ENCODE measurements at regions of chr1 and their contacts with region 1.

Region 1: DNA sequence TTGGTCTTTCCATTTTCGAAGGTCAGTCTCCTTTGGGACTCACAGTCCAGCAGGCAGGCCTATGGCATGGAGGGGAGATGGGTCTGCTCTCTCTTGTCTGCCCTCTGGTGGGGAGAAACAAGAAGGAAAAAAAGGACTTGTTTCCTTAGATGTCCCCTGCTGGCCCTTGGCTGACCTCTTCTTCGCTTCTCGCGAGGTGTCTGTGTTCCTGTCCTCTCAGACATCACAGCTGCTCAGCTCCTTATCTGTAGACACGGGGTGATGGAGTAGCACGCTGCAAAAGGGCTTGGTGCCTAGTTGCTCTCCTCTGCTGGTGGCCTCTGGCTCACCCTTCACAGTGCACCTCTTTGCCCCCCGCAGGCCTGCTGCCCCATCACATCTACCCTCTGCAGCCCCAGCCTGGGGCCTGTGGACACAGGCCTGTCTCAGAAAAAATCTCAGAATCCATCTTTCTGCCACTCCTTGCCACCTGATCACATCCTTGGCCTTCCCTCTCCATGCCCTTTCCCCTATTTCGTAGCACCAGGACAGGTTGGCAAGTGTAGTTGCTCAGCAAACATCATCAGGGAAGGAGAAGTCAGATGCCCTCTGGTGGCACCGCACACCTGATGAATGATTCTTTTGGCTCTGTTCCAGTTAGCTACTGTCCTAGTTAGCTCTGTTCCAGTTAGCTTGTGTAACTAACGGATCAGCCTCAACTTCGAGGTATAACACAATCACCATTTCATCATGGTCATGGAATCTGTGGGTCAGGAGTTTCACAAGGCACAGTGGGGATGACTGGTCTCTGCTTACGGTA is 18.7 kb upstream of the AK2 start:
- DNase-seq: peak in 9 of 35 experiments; percentile 10 to 64 (median 19)
- ATAC-seq: peak in 2 of 4 experiments; percentile 30 to 44
- H3K4me3 ChIP-seq: no peak overlapping the region
- H3K4me3 Mint-ChIP-seq: no peak overlapping the region
- H3K27ac ChIP-seq: no peak overlapping the region
- H3K27ac Mint-ChIP-seq: no peak overlapping the region
- H3K4me1 ChIP-seq: no peaks in the 10 kb centered on the region
- H3K4me1 Mint-ChIP-seq: peaks cover 0 to 5% (median 2%) of the 10 kb centered on the region in 3 donors
- H3K27me3 ChIP-seq: peaks cover 0 to 8% of the 10 kb centered on the region in 2 experiments
- H3K27me3 Mint-ChIP-seq: peaks cover 3% of the 10 kb centered on the region in 2 donors

Region 2: DNA sequence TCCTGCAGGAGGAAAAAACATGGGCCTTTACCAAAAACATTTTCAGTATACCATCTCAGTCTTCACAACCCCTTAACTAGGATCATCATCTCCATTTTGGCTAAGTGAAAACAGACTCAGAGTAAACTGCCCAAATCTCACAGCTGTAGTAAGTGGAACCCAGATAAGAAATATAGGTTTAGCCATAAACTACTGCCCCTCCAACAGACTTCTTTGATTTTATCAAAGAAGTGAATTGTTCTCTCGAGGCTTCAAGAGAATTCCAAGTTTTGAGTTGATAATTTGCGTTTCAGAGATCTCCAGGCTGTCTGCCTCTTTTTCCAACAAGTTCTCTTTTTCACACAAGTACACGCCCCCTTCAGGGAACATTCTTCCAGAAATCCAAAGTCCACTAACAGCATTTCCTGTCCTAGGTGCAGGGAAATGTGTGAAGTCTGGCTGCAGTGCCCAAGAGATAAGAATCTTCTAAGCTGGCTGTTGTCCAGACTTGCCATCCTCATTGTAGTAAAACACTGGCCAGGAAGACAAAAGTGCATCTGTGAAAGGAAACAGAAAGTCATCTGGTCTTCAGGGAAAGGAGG is 121.6 kb before region 1 on chr1:
- CTCF ChIA-PET with region 1: interaction called, 3 to 11 read pairs
- POLR2A ChIA-PET with region 1: no interaction called
- DNase-seq: no peak
- ATAC-seq: no peak
- H3K4me3 ChIP-seq: no peak overlapping the region
- H3K4me3 Mint-ChIP-seq: no peak overlapping the region
- H3K27ac ChIP-seq: no peak overlapping the region
- H3K27ac Mint-ChIP-seq: peak overlapping the region in 1 of 2 donors; percentile 5
- H3K4me1 ChIP-seq: no peaks in the 10 kb centered on the region
- H3K4me1 Mint-ChIP-seq: no peaks in the 10 kb centered on the region
- H3K27me3 ChIP-seq: no peaks in the 10 kb centered on the region
- H3K27me3 Mint-ChIP-seq: no peaks in the 10 kb centered on the region

Region 3: GRCh38 chr1:32944180-32944579 is 111.2 kb before region 1 on chr1:
- CTCF ChIA-PET with region 1: no interaction called
- POLR2A ChIA-PET with region 1: no interaction called
- DNase-seq: no peak
- ATAC-seq: no peak
- H3K4me3 ChIP-seq: no peak overlapping the region
- H3K4me3 Mint-ChIP-seq: no peak overlapping the region
- H3K27ac ChIP-seq: no peak overlapping the region
- H3K27ac Mint-ChIP-seq: no peak overlapping the region
- H3K4me1 ChIP-seq: peaks cover 0 to 5% of the 10 kb centered on the region in 2 experiments
- H3K4me1 Mint-ChIP-seq: peaks cover 10 to 26% (median 14%) of the 10 kb centered on the region in 3 donors
- H3K27me3 ChIP-seq: no peaks in the 10 kb centered on the region
- H3K27me3 Mint-ChIP-seq: no peaks in the 10 kb centered on the region

Region 4: DNA sequence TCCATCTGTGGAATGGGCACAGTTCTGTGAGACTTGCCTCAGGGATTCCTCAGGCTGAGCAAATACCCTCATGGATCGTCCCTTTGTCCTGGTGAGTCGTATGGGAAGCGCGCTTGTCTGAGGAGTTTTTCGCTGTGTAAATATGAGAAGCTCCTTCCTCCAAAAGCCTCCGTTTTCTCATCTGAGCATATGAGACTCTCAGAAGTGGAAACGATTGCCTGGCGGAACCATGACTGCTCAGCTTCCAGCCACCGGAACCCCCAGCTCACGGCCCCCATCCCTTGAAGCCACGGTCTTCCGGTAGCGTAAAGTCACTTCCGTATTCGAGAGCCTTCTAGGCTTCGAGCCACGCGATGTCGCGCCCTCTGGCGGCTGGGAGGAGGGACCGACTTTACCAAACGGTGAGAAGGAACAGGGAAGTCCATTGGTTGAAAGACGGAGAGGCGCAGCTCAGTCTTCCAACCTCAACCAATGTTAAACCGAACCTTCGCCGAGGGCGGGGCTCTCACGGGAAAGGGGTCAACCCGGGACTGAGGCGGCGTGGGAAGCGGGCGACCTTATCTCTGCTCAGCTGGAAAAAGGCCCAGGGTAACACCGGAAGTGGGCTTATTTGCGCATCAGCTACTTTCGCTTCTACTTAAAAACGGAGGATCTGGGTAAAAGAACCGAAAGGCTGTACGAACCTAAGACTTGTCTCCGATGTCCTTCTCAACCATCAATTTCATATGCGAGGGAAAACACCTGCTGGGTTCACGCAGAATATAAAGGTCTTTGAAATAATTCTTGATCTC is 71.8 kb after region 1 on chr1:
- CTCF ChIA-PET with region 1: no interaction called
- POLR2A ChIA-PET with region 1: no interaction called
- DNase-seq: peak; percentile 94 to 100 (median 98)
- ATAC-seq: peak; percentile 90 to 96 (median 93)
- H3K4me3 ChIP-seq: peak overlapping the region; percentile 93
- H3K4me3 Mint-ChIP-seq: peak overlapping the region; percentile 86 to 93 (median 93)
- H3K27ac ChIP-seq: peak overlapping the region; percentile 93
- H3K27ac Mint-ChIP-seq: peak overlapping the region; percentile 96
- H3K4me1 ChIP-seq: peaks cover 19 to 27% of the 10 kb centered on the region in 2 experiments
- H3K4me1 Mint-ChIP-seq: peaks cover 38 to 58% (median 56%) of the 10 kb centered on the region in 3 donors
- H3K27me3 ChIP-seq: no peaks in the 10 kb centered on the region
- H3K27me3 Mint-ChIP-seq: no peaks in the 10 kb centered on the region

Measured in T-cell (primary cell).